ENCODE measurements at regions of chr6 and their contacts with region 1.

Region 1: DNA sequence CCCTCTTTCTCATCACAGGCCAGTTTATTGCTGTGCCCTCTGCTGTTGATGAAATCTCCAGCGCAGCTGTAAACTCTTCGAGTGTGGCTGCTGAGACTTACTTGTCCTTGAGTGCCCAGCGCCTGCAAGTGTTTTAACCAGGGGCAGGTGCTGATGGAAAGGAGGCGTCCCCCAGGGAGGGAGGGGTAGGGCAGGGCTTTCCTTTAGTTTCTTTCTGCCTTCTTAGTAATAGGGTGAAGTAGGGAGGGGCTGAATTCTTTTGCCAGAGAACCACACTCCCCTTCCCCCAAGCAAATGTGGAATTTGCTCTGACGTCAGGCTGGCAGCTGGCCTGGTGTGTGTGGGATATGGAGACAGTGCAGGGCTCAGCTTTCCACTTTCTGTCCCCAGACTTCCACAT is 61.2 kb downstream of the IGF2R start:
- DNase-seq: no peak
- H3K4me3 ChIP-seq: no peak overlapping the region
- H3K27ac ChIP-seq: peak overlapping the region; percentile 42 to 73 (median 60)
- H3K4me1 ChIP-seq: peaks cover 0 to 27% (median 8%) of the 10 kb centered on the region in 3 donors
- H3K27me3 ChIP-seq: no peaks in the 10 kb centered on the region
- CTCF ChIP-seq: no peak
- POLR2A ChIP-seq: no peak

Region 2: DNA sequence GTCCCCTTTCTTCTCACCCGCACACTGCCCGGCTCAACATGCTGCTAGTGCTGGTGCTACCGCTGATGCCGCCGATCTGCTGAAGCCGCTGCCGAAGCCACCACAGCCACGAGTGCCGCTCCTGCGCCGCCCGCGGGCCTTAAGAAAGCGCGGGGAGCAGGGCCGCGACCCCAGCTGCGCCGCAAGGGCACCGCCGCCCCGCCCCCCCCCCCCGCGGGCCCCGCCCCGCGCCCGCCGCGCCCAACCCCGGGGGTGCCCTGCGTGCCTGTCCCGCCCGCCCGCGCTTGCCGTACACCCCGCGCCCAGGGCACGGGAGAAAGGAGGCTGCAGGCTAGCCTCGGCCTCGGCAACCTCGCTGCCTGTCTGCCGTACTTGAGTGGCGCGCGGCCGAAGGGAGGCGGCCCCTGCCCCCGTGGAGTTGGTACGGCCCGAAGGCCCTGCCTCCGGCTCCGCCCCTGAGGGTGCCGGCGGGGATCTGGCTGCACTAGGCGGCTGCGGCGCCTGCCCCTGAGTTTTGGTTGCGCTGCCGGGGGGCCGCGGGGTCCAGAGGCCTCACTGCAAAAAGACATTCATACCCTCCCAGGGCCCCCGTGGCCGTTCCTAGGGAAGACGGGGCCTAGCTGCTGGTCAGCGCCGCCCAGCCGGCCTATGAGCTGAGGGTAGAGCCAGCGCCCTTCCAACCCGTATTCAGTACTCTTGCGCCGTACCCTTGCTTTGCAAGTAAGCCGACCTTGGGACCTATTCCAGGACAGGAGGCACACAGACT is 336.8 kb before region 1 on chr6 and contains the start of gene SOD2:
- intact Hi-C with region 1: loop called (anchors 10 kb)
- DNase-seq: peak; percentile 54
- H3K4me3 ChIP-seq: peak within 1 kb of the TSS; percentile 73 to 92 (median 80)
- H3K27ac ChIP-seq: peak within 1 kb of the TSS; percentile 95 to 97 (median 96)
- H3K4me1 ChIP-seq: peaks cover 7 to 57% (median 26%) of the 10 kb centered on the region in 3 donors
- H3K27me3 ChIP-seq: no peaks in the 10 kb centered on the region
- CTCF ChIP-seq: peak in 1 of 6 experiments; percentile 16
- POLR2A ChIP-seq: peak in 3 of 4 donors; percentile 33 to 91 (median 87)
- total RNA-seq, gene SOD2: 227 to 792 (median 519) TPM

Region 3: DNA sequence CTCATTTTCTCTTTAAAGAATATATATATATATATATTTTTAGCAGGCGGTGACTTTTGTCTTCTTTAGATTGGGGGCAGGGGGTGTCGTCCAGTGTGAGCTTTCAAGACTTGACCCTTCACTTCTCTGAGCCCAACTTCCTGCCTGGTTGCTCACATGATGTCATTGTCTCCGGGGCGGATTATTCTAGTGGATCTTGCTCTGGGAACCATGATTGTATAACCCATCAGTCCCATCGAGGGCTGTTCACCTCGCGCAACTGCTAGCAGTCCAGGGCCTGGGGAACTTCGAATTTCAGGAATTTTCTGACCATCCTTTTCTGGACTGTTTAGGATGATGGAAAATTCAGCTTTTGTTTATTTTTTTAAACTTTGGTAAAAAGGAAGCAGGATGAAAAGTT is 60.2 kb before region 1 on chr6:
- intact Hi-C with region 1: loop called (anchors 10 kb)
- DNase-seq: no peak
- H3K4me3 ChIP-seq: peak overlapping the region; percentile 79 to 99 (median 94)
- H3K27ac ChIP-seq: peak overlapping the region; percentile 93 to 97 (median 95)
- H3K4me1 ChIP-seq: peaks cover 18 to 60% (median 21%) of the 10 kb centered on the region in 3 donors
- H3K27me3 ChIP-seq: no peaks in the 10 kb centered on the region
- CTCF ChIP-seq: no peak
- POLR2A ChIP-seq: no peak

Measured in esophagus squamous epithelium (tissue), 5 donors.